Caco-2 (cell line): ENCODE measurements at regions of chr16 and their contacts with region 1.

Region 1: GRCh38 chr16:66894948-66895688 is 14.8 kb downstream of the PDP2 start:
- DNase-seq: peak; percentile 81 to 83
- H3K4me3 ChIP-seq: no peak overlapping the region
- H3K4me3 Mint-ChIP-seq: no peak overlapping the region
- H3K27ac Mint-ChIP-seq: peak overlapping the region; percentile 64
- H3K4me1 ChIP-seq: peaks cover 39% of the 10 kb centered on the region
- H3K4me1 Mint-ChIP-seq: peaks cover 29% of the 10 kb centered on the region
- H3K27me3 ChIP-seq: no peaks in the 10 kb centered on the region
- H3K27me3 Mint-ChIP-seq: no peaks in the 10 kb centered on the region
- CTCF ChIP-seq: peak; percentile 83 to 94

Region 2: GRCh38 chr16:66603537-66604375 is 291.4 kb before region 1 on chr16:
- CTCF ChIA-PET with region 1: no interaction called
- POLR2A ChIA-PET with region 1: no interaction called
- intact Hi-C with region 1: no loop called
- DNase-seq: peak; percentile 73 to 84
- H3K4me3 ChIP-seq: peak overlapping the region; percentile 74
- H3K4me3 Mint-ChIP-seq: peak overlapping the region; percentile 82
- H3K27ac Mint-ChIP-seq: peak overlapping the region; percentile 62
- H3K4me1 ChIP-seq: peaks cover 23% of the 10 kb centered on the region
- H3K4me1 Mint-ChIP-seq: peaks cover 18% of the 10 kb centered on the region
- H3K27me3 ChIP-seq: no peaks in the 10 kb centered on the region
- H3K27me3 Mint-ChIP-seq: peaks cover 4% of the 10 kb centered on the region
- CTCF ChIP-seq: no peak

Region 3: GRCh38 chr16:66911112-66911511 is 16.0 kb after region 1 on chr16:
- CTCF ChIA-PET with region 1: interaction called, 13 read pairs
- POLR2A ChIA-PET with region 1: no interaction called
- intact Hi-C with region 1: no loop called
- DNase-seq: no peak
- H3K4me3 ChIP-seq: no peak overlapping the region
- H3K4me3 Mint-ChIP-seq: no peak overlapping the region
- H3K27ac Mint-ChIP-seq: no peak overlapping the region
- H3K4me1 ChIP-seq: peaks cover 12% of the 10 kb centered on the region
- H3K4me1 Mint-ChIP-seq: peaks cover 5% of the 10 kb centered on the region
- H3K27me3 ChIP-seq: no peaks in the 10 kb centered on the region
- H3K27me3 Mint-ChIP-seq: no peaks in the 10 kb centered on the region
- CTCF ChIP-seq: no peak

Region 4: GRCh38 chr16:66924527-66925321 is 29.6 kb after region 1 on chr16:
- CTCF ChIA-PET with region 1: interaction called, 36 read pairs
- POLR2A ChIA-PET with region 1: no interaction called
- intact Hi-C with region 1: loop called (anchors 1 kb)
- DNase-seq: peak in 1 of 2 experiments; percentile 76
- H3K4me3 ChIP-seq: peak overlapping the region; percentile 41
- H3K4me3 Mint-ChIP-seq: peak overlapping the region; percentile 73
- H3K27ac Mint-ChIP-seq: no peak overlapping the region
- H3K4me1 ChIP-seq: peaks cover 7% of the 10 kb centered on the region; the same call in 1 of the 2 replicates
- H3K4me1 Mint-ChIP-seq: no peaks in the 10 kb centered on the region
- H3K27me3 ChIP-seq: no peaks in the 10 kb centered on the region
- H3K27me3 Mint-ChIP-seq: peaks cover 5% of the 10 kb centered on the region
- CTCF ChIP-seq: peak; percentile 38 to 48

Region 5: DNA sequence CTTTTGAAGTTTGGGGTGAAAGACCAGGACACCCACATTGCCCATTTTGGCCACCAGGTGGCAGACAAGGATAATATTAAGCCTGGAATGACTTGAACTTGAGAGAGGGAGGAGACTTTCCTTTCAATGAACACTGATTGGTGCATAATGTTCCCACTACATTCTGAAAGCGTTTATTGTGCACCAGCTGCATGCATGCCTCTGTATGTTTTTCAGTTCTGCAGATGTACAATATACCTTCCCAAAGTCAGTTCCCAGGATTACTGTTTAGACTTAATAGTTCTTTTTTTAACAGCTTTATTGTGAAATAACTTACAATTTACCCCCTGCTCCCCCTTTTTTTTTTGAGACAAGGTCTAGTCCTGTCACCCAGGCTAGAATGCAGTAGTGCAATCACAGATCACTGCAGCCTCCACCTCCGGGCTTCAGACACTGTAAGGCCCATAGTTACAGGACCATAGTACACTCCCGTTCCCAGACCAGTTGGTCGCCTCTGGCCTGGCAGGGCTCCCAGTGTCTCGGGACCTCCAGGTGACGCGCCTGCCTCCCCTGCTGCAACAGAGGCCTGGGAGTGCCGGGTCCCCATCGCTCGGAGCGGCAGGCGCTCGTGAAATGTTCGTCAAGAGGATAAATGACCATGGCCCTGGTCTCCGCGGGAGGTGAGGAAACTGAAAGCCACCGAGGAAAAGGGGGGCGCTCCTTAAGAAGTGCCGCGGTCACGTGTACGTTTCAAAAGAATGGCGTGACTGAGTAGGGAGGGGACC is 52.4 kb after region 1 on chr16:
- CTCF ChIA-PET with region 1: interaction called, 7 read pairs
- POLR2A ChIA-PET with region 1: interaction called, 3 read pairs
- intact Hi-C with region 1: loop called (anchors 1 kb)
- DNase-seq: peak; percentile 81 to 87
- H3K4me3 ChIP-seq: no peak overlapping the region
- H3K4me3 Mint-ChIP-seq: peak overlapping the region; percentile 40
- H3K27ac Mint-ChIP-seq: peak overlapping the region; percentile 48
- H3K4me1 ChIP-seq: no peaks in the 10 kb centered on the region
- H3K4me1 Mint-ChIP-seq: no peaks in the 10 kb centered on the region
- H3K27me3 ChIP-seq: no peaks in the 10 kb centered on the region
- H3K27me3 Mint-ChIP-seq: no peaks in the 10 kb centered on the region
- CTCF ChIP-seq: peak; percentile 82 to 87

Region 6: GRCh38 chr16:66954097-66954659 is 59.1 kb after region 1 on chr16:
- CTCF ChIA-PET with region 1: interaction called, 11 read pairs
- POLR2A ChIA-PET with region 1: no interaction called
- intact Hi-C with region 1: loop called (anchors 2 kb)
- DNase-seq: peak; percentile 81 to 88
- H3K4me3 ChIP-seq: no peak overlapping the region
- H3K4me3 Mint-ChIP-seq: peak overlapping the region; percentile 50
- H3K27ac Mint-ChIP-seq: peak overlapping the region; percentile 72
- H3K4me1 ChIP-seq: peaks cover 17% of the 10 kb centered on the region
- H3K4me1 Mint-ChIP-seq: peaks cover 15% of the 10 kb centered on the region
- H3K27me3 ChIP-seq: no peaks in the 10 kb centered on the region
- H3K27me3 Mint-ChIP-seq: no peaks in the 10 kb centered on the region
- CTCF ChIP-seq: peak; percentile 88 to 90